ENCODE measurements at regions of chrX and their contacts with region 1.

Region 1: DNA sequence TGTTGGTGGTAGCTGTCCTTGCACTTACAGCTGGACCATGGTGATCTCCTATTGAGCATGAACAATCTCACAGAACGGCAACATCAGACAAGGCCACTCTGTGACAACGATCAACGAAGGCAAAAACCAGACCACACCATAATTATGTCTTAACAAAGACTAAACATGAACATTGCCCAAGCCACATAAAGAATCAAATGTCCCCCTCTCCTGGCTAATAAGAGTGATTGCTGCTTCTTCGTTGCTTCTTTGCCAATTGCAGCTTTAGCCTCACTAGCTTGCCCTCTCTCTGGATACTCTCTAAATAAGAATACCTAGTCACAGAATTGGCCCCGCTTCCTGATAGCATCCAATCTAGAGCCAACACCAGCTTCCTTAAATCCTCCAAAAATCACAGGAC is 41.5 kb upstream of the PGRMC1 start:
- DNase-seq: no peak
- H3K4me3 ChIP-seq: no peak overlapping the region
- H3K27ac ChIP-seq: no peak overlapping the region
- H3K4me1 ChIP-seq: no peaks in the 10 kb centered on the region
- H3K27me3 ChIP-seq: no peaks in the 10 kb centered on the region
- CTCF ChIP-seq: peak in 2 of 3 experiments; percentile 34 to 47; a peak in 2 of 4 replicates
- EP300 ChIP-seq: no peak
- POLR2A ChIP-seq: no peak
- RAD21 ChIP-seq: peak; percentile 52 to 61

Region 2: GRCh38 chrX:119028733-119029330 is 165.8 kb before region 1 on chrX:
- CTCF ChIA-PET with region 1: no interaction called
- POLR2A ChIA-PET with region 1: no interaction called
- DNase-seq: no peak
- H3K4me3 ChIP-seq: no peak overlapping the region
- H3K27ac ChIP-seq: no peak overlapping the region
- H3K4me1 ChIP-seq: no peaks in the 10 kb centered on the region
- H3K27me3 ChIP-seq: no peaks in the 10 kb centered on the region
- CTCF ChIP-seq: no peak
- EP300 ChIP-seq: no peak
- POLR2A ChIP-seq: no peak
- RAD21 ChIP-seq: no peak

Region 3: GRCh38 chrX:119105826-119106225 is 88.8 kb before region 1 on chrX:
- CTCF ChIA-PET with region 1: no interaction called
- POLR2A ChIA-PET with region 1: no interaction called
- DNase-seq: no peak
- H3K4me3 ChIP-seq: no peak overlapping the region
- H3K27ac ChIP-seq: no peak overlapping the region
- H3K4me1 ChIP-seq: no peaks in the 10 kb centered on the region
- H3K27me3 ChIP-seq: no peaks in the 10 kb centered on the region
- CTCF ChIP-seq: no peak
- EP300 ChIP-seq: no peak
- POLR2A ChIP-seq: no peak
- RAD21 ChIP-seq: no peak

Region 4: DNA sequence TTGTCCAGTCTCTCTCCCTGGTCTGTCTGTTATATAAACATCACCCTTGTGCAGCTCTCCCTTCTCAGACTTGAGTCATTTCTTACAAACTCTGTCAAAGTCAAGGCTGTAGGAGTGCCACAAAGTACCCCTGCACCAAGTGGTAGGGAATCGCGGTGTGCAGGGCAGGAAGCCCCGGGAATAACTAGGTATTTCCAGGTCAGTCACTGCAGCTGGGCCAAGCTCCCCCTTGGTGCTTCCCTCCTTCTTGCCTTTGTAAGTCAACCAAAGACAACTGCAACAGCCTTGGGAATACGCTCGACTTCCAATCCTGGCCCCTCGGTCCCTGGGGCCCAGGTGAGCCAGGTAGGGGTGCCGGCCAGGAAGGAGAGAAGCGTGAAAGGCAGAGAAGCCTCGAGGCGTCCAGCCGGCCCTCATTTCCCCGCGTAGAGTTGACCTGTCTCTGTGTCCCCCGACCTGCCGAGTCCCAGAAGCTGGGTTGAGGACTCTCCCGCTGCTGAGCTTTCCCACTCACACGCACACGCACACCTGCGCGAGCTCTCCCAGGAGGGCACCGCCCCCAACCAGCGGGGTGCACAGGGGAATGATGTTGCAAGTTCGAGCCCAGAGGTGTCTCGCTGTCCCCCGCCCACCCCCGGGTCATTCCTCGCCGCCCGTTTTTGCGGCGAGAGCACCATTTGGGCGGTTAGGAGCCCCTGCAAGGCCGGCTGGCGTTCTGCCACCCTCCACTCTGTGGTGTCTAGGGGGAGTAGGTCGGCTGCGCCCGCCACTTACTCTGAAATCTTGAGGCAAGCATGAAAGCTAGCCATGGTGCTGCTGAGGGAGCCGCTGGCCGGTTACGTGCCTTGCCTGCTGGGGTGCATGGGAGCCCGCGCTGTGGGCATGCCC is 44.2 kb before region 1 on chrX:
- CTCF ChIA-PET with region 1: interaction called, 11 read pairs
- POLR2A ChIA-PET with region 1: interaction called, 3 read pairs
- DNase-seq: peak in 1 of 2 experiments; percentile 45
- H3K4me3 ChIP-seq: peak overlapping the region in 1 of 4 experiments; percentile 34; a peak in 1 of 8 replicates
- H3K27ac ChIP-seq: no peak overlapping the region
- H3K4me1 ChIP-seq: no peaks in the 10 kb centered on the region; a peak in 1 of 7 replicates
- H3K27me3 ChIP-seq: no peaks in the 10 kb centered on the region; a peak in 1 of 7 replicates
- CTCF ChIP-seq: no peak
- EP300 ChIP-seq: no peak
- POLR2A ChIP-seq: no peak
- RAD21 ChIP-seq: no peak

Region 5: GRCh38 chrX:119168104-119168503 is 26.5 kb before region 1 on chrX:
- CTCF ChIA-PET with region 1: no interaction called
- POLR2A ChIA-PET with region 1: no interaction called
- DNase-seq: no peak
- H3K4me3 ChIP-seq: no peak overlapping the region
- H3K27ac ChIP-seq: no peak overlapping the region
- H3K4me1 ChIP-seq: no peaks in the 10 kb centered on the region
- H3K27me3 ChIP-seq: no peaks in the 10 kb centered on the region
- CTCF ChIP-seq: no peak
- EP300 ChIP-seq: no peak
- POLR2A ChIP-seq: no peak
- RAD21 ChIP-seq: no peak

Region 6: GRCh38 chrX:119206203-119206602 is 11.6 kb after region 1 on chrX:
- CTCF ChIA-PET with region 1: interaction called, 24 read pairs
- POLR2A ChIA-PET with region 1: no interaction called
- DNase-seq: no peak
- H3K4me3 ChIP-seq: no peak overlapping the region
- H3K27ac ChIP-seq: no peak overlapping the region
- H3K4me1 ChIP-seq: no peaks in the 10 kb centered on the region
- H3K27me3 ChIP-seq: no peaks in the 10 kb centered on the region
- CTCF ChIP-seq: no peak
- EP300 ChIP-seq: no peak
- POLR2A ChIP-seq: no peak
- RAD21 ChIP-seq: no peak